ENCODE measurements at regions of chr16 and their contacts with region 1.

Region 1: GRCh38 chr16:66635406-66635805 is 30.9 kb downstream of the CMTM3 start:
- DNase-seq: no peak
- H3K4me3 Mint-ChIP-seq: no peak overlapping the region
- H3K27ac Mint-ChIP-seq: no peak overlapping the region
- H3K4me1 Mint-ChIP-seq: no peaks in the 10 kb centered on the region
- H3K27me3 Mint-ChIP-seq: peaks cover 2% of the 10 kb centered on the region

Region 2: GRCh38 chr16:66650707-66651473 is 15.5 kb after region 1 on chr16:
- CTCF ChIA-PET with region 1: interaction called, 11 read pairs
- POLR2A ChIA-PET with region 1: no interaction called
- DNase-seq: peak; percentile 89
- H3K4me3 Mint-ChIP-seq: no peak overlapping the region
- H3K27ac Mint-ChIP-seq: no peak overlapping the region
- H3K4me1 Mint-ChIP-seq: peaks cover 15% of the 10 kb centered on the region
- H3K27me3 Mint-ChIP-seq: peaks cover 1% of the 10 kb centered on the region